Activated CD8-positive, alpha-beta T cell treated with anti-CD3 and anti-CD28 coated beads, Interleukin-2, amount 10 ng/mL, durations not matched to agents 7 days and 5 days (primary cell): ENCODE measurements at regions of chr18 and their contacts with region 1.

Region 1: GRCh38 chr18:24488824-24489493 is 28.5 kb downstream of the HRH4 start:
- DNase-seq: no peak
- ATAC-seq: no peak
- H3K4me3 Mint-ChIP-seq: no peak overlapping the region
- H3K27ac Mint-ChIP-seq: no peak overlapping the region
- H3K4me1 Mint-ChIP-seq: peaks cover 6% of the 10 kb centered on the region
- H3K27me3 Mint-ChIP-seq: peaks cover 20% of the 10 kb centered on the region

Region 2: GRCh38 chr18:24176727-24177416 is 312.1 kb before region 1 on chr18:
- CTCF ChIA-PET with region 1: interaction called, 34 read pairs
- POLR2A ChIA-PET with region 1: no interaction called
- DNase-seq: peak; percentile 58
- ATAC-seq: peak; percentile 30
- H3K4me3 Mint-ChIP-seq: no peak overlapping the region
- H3K27ac Mint-ChIP-seq: no peak overlapping the region
- H3K4me1 Mint-ChIP-seq: no peaks in the 10 kb centered on the region
- H3K27me3 Mint-ChIP-seq: peaks cover 7% of the 10 kb centered on the region

Region 3: DNA sequence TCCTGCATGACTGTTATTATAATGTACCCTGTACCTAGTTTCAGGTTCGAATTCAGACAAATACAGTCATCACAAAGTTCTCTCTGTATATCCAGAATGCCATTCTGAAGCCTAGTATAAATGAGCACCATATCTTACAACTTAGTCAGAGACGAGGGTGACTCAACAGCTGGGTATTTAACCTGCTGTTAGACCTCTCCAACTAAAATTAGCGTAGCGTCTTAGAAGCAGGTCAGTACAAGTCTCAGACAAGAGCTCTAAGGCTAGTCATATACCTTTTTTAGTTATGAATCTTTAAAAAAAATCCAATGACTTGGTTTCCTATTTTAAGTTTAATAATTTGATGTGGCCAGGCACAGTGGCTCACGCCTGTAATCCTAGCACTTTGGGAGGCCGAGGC is 276.0 kb before region 1 on chr18:
- CTCF ChIA-PET with region 1: no interaction called
- POLR2A ChIA-PET with region 1: no interaction called
- DNase-seq: no peak
- ATAC-seq: no peak
- H3K4me3 Mint-ChIP-seq: no peak overlapping the region
- H3K27ac Mint-ChIP-seq: no peak overlapping the region
- H3K4me1 Mint-ChIP-seq: no peaks in the 10 kb centered on the region
- H3K27me3 Mint-ChIP-seq: peaks cover 13% of the 10 kb centered on the region

Region 4: DNA sequence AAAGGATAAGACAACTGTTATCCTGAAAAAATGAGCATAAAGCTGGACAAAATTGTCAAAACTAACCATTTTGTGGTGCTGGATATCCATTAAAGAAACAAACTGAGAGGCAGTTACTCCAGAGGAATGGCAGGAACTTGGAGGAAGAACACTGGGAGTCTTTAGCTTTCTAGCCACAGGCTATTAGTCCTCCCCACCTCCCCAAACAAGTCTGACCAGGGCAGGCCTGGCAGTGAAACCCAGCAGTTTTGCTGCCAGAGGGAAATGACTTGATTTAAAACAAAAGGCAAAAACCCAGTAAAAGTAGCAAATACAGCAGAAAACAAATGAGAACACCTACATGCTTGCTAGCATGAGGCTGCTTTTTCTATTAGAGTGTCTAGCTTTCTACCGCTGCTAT is 126.2 kb before region 1 on chr18:
- CTCF ChIA-PET with region 1: interaction called, 163 read pairs
- POLR2A ChIA-PET with region 1: interaction called, 3 read pairs
- DNase-seq: no peak
- ATAC-seq: no peak
- H3K4me3 Mint-ChIP-seq: no peak overlapping the region
- H3K27ac Mint-ChIP-seq: no peak overlapping the region
- H3K4me1 Mint-ChIP-seq: no peaks in the 10 kb centered on the region
- H3K27me3 Mint-ChIP-seq: no peaks in the 10 kb centered on the region

Region 5: DNA sequence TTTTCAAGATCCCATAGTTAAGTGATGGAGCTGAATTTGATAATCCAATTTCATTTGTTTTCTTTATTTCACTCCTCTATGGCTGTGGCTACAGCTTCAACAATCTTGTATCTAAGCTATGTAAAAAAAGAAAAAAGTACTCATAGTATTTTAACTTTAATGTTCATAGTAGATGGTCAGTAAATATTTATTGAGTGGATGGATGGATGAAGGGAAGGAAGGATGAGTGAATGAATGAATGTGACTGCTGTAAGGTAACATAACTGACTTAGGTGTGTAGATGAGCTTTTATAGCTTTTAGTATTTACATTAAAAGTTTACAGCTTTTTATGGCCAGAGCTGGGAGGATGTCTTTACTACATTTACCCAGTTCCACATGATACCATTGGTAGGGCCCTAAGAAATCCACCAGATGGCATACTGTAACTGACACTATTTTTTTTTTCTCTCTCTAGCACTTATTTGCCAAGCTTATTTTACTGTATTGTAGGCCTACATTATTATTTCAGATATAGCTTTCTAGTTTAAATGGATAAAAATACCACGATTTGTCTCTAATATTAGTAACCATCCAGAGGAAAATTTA is 41.9 kb before region 1 on chr18:
- CTCF ChIA-PET with region 1: interaction called, 25 read pairs
- POLR2A ChIA-PET with region 1: no interaction called
- DNase-seq: no peak
- ATAC-seq: no peak
- H3K4me3 Mint-ChIP-seq: no peak overlapping the region
- H3K27ac Mint-ChIP-seq: no peak overlapping the region
- H3K4me1 Mint-ChIP-seq: peaks cover 10% of the 10 kb centered on the region
- H3K27me3 Mint-ChIP-seq: no peaks in the 10 kb centered on the region

Region 6: GRCh38 chr18:24462838-24463775 is 25.9 kb before region 1 on chr18:
- CTCF ChIA-PET with region 1: interaction called, 26 read pairs
- POLR2A ChIA-PET with region 1: interaction called, 3 read pairs
- DNase-seq: no peak
- ATAC-seq: no peak
- H3K4me3 Mint-ChIP-seq: no peak overlapping the region
- H3K27ac Mint-ChIP-seq: no peak overlapping the region
- H3K4me1 Mint-ChIP-seq: peaks cover 3% of the 10 kb centered on the region
- H3K27me3 Mint-ChIP-seq: peaks cover 3% of the 10 kb centered on the region

Region 7: DNA sequence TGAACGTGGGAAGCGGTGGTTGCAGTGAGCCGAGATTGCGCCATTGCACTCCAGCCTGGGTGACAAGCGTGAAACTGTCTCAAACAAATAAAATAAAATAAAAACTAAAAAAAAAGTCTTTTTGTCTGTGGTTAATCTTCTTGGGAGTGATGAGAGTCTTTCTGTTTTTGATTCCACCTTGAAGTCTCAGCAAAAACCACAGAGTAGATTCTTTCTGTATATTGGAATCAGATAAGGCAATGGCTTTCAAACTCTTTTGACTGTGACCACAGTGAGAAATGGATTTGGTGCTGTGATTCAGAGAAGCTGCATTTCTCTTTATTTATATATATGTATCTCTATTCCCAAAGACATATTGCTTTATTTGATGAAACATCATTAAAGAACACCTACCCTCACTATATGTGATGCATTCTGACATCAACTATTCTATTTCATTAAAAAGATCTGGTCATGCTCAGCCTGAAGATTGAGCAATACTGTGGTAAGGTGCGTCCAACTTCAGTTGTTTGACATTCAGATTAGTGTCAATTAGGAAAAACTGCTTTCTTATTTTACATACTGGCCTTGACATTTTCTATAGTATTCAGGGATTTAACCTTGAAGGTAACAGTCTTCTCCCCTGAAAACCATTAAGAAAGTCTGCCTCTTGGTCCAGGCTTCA is 12.9 kb before region 1 on chr18:
- CTCF ChIA-PET with region 1: interaction called, 11 read pairs
- POLR2A ChIA-PET with region 1: interaction called, 5 read pairs
- DNase-seq: no peak
- ATAC-seq: no peak
- H3K4me3 Mint-ChIP-seq: no peak overlapping the region
- H3K27ac Mint-ChIP-seq: no peak overlapping the region
- H3K4me1 Mint-ChIP-seq: no peaks in the 10 kb centered on the region
- H3K27me3 Mint-ChIP-seq: peaks cover 2% of the 10 kb centered on the region

Region 8: DNA sequence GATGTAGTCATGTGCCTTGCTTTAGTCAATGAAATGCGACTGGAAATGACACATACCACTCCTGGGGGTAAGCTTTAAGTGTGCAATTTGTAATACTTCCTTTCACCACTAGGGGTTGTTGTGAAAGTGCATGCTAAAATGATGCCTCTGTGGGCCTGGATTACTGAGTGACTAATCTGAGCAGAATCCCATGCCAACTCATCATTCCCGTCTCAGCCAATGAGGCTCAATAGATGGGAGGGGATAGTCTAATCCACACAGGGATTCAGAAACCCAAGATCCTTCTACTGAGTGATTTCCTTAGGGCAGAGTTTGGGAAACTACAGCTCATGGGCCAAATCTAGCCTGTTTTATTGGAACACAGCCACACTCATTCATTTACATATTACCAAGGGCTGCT is 25.5 kb after region 1 on chr18:
- CTCF ChIA-PET with region 1: interaction called, 15 read pairs
- POLR2A ChIA-PET with region 1: no interaction called
- DNase-seq: no peak
- ATAC-seq: peak; percentile 49
- H3K4me3 Mint-ChIP-seq: no peak overlapping the region
- H3K27ac Mint-ChIP-seq: no peak overlapping the region
- H3K4me1 Mint-ChIP-seq: no peaks in the 10 kb centered on the region
- H3K27me3 Mint-ChIP-seq: no peaks in the 10 kb centered on the region

Region 9: DNA sequence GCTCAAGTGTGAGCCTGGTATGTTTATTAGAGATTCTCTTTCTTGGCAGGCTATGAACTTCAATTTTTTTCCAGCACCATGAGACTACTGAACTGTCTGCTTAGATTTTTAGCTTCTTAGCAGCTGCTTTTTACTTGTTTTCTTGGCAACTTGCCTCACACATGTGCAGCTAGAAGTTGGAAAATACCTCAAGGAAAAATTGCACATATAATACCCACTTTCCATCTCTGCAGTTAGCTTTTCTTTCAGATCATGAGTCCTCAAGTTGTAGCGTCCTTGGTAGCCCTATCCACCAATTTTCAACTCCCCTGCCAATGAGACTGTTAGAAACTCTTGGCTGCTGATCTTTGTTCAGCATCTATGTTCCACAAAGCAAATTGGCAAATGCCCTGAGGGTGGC is 273.6 kb after region 1 on chr18:
- CTCF ChIA-PET with region 1: no interaction called
- POLR2A ChIA-PET with region 1: no interaction called
- DNase-seq: no peak
- ATAC-seq: no peak
- H3K4me3 Mint-ChIP-seq: no peak overlapping the region
- H3K27ac Mint-ChIP-seq: no peak overlapping the region
- H3K4me1 Mint-ChIP-seq: no peaks in the 10 kb centered on the region
- H3K27me3 Mint-ChIP-seq: peaks cover 2% of the 10 kb centered on the region